ENCODE measurements at regions of chr10 and their contacts with region 1.

Region 1: GRCh38 chr10:102503281-102504220 is at the start of gene SUFU:
- DNase-seq: peak; percentile 95 to 100
- ATAC-seq: peak; percentile 76 to 90 (median 76)
- H3K4me3 ChIP-seq: peak within 1 kb of the TSS; percentile 99
- H3K4me3 Mint-ChIP-seq: no peak within 1 kb of the TSS
- H3K27ac ChIP-seq: peak within 1 kb of the TSS; percentile 90
- H3K27ac Mint-ChIP-seq: no peak within 1 kb of the TSS
- H3K4me1 ChIP-seq: peaks cover 33% of the 10 kb centered on the region
- H3K4me1 Mint-ChIP-seq: peaks cover 25% of the 10 kb centered on the region in 2 donors
- H3K27me3 ChIP-seq: no peaks in the 10 kb centered on the region
- H3K27me3 Mint-ChIP-seq: no peaks in the 10 kb centered on the region
- CTCF ChIP-seq: peak; percentile 70
- total RNA-seq, gene SUFU: 8.2 to 13.0 (median 11.5) TPM

Region 2: GRCh38 chr10:102064868-102065560 is 438.5 kb before region 1 on chr10 and contains the start of gene HPS6:
- intact Hi-C with region 1: loop called (anchors 2 kb)
- DNase-seq: peak; percentile 81 to 92
- ATAC-seq: peak; percentile 96
- H3K4me3 ChIP-seq: peak within 1 kb of the TSS; percentile 55
- H3K4me3 Mint-ChIP-seq: peak within 1 kb of the TSS; percentile 90
- H3K27ac ChIP-seq: peak within 1 kb of the TSS; percentile 81
- H3K27ac Mint-ChIP-seq: peak within 1 kb of the TSS; percentile 72 to 88
- H3K4me1 ChIP-seq: peaks cover 36% of the 10 kb centered on the region
- H3K4me1 Mint-ChIP-seq: peaks cover 21 to 33% of the 10 kb centered on the region in 2 donors
- H3K27me3 ChIP-seq: no peaks in the 10 kb centered on the region
- H3K27me3 Mint-ChIP-seq: no peaks in the 10 kb centered on the region
- CTCF ChIP-seq: no peak
- total RNA-seq, gene HPS6: 10.2 to 20.1 (median 18.5) TPM

Region 3: DNA sequence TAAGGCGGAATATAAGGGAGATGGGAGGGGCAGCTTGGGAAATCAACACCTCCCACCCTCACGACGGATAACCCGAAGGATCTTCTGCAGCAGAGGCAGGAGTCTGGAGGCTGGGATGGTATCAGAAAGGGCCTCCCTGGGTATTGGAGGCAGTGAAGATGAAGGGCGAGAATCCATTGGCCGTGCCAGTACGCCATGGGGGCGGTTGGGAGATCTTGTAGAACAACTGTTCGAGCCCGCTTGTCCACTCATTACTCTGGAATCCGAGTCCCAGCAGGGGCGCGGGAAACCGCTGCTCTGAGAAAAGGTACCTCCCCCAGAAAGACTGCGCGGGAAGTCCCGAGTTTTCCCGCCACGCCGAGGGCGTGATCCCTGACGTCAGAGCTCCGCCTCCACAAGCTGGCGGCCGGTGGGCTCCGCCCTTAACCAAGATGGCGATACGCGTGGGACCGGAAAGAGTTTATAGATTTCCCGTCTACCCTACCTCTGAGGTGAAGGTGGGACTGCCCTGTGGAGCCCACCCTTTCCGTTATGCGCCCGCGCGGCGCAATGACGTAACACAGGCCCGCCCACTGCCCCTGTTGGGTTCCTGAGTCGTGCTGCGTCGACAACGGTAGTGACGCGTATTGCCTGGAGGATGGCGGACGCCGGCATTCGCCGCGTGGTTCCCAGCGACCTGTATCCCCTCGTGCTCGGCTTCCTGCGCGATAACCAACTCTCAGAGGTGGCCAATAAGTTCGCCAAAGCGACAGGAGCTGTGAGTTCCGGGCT is 351.6 kb before region 1 on chr10 and contains the start of gene NOLC1:
- intact Hi-C with region 1: loop called (anchors 1 kb)
- DNase-seq: peak; percentile 100
- ATAC-seq: peak; percentile 88 to 97 (median 88)
- H3K4me3 ChIP-seq: peak within 1 kb of the TSS; percentile 90
- H3K4me3 Mint-ChIP-seq: peak within 1 kb of the TSS; percentile 93
- H3K27ac ChIP-seq: peak within 1 kb of the TSS; percentile 97
- H3K27ac Mint-ChIP-seq: peak within 1 kb of the TSS; percentile 93 to 97
- H3K4me1 ChIP-seq: peaks cover 24% of the 10 kb centered on the region
- H3K4me1 Mint-ChIP-seq: peaks cover 20 to 31% of the 10 kb centered on the region in 2 donors
- H3K27me3 ChIP-seq: no peaks in the 10 kb centered on the region
- H3K27me3 Mint-ChIP-seq: no peaks in the 10 kb centered on the region
- CTCF ChIP-seq: no peak
- total RNA-seq, gene NOLC1: 42.6 to 47.5 (median 43.4) TPM

Region 4: GRCh38 chr10:102432162-102432950 is 71.2 kb before region 1 on chr10 and contains the start of gene CUEDC2:
- intact Hi-C with region 1: loop called (anchors 2 kb)
- DNase-seq: peak; percentile 95 to 96
- ATAC-seq: peak; percentile 94 to 97 (median 96)
- H3K4me3 ChIP-seq: peak within 1 kb of the TSS; percentile 99
- H3K4me3 Mint-ChIP-seq: peak within 1 kb of the TSS; percentile 97
- H3K27ac ChIP-seq: peak within 1 kb of the TSS; percentile 63
- H3K27ac Mint-ChIP-seq: peak within 1 kb of the TSS; percentile 86 to 91
- H3K4me1 ChIP-seq: peaks cover 56% of the 10 kb centered on the region
- H3K4me1 Mint-ChIP-seq: peaks cover 56 to 57% of the 10 kb centered on the region in 2 donors
- H3K27me3 ChIP-seq: no peaks in the 10 kb centered on the region
- H3K27me3 Mint-ChIP-seq: no peaks in the 10 kb centered on the region
- CTCF ChIP-seq: no peak
- total RNA-seq, gene CUEDC2: 35.0 to 43.0 (median 37.7) TPM

Region 5: DNA sequence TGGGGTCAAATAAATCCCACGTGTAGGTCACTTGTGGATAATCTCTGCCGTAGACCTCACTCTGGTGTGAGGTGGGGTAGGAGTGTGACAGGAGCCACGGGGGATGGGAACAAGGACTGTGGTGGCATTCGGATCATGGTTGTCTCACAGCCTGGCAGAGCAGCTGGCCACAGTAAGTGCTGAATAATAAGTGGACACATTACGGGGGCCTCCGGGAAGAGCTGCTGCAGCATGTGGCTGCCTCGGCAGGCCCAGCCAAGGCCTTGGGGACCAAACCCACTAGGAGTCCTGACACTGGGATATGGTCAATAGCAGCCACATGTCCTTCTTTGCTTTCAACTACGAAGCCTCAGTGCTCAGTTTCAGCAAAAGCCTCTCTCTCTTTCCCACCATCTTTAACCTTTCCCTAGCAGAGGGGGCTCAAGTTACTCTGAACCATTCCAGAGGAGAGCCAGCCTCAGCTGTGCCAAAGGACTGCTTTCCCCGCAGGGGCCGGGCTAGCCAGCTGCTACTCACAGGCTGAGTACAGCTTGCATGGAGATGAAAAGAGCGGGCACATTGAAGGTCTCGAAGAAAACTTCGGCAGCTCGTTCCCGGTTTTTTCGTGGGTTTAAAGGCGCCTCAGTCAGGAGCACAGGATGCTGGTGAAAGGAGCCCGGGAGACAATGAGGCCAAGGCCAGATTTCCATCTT is 18.3 kb before region 1 on chr10:
- intact Hi-C with region 1: no loop called
- DNase-seq: no peak
- ATAC-seq: no peak
- H3K4me3 ChIP-seq: no peak overlapping the region
- H3K4me3 Mint-ChIP-seq: no peak overlapping the region
- H3K27ac ChIP-seq: no peak overlapping the region
- H3K27ac Mint-ChIP-seq: no peak overlapping the region
- H3K4me1 ChIP-seq: no peaks in the 10 kb centered on the region
- H3K4me1 Mint-ChIP-seq: no peaks in the 10 kb centered on the region
- H3K27me3 ChIP-seq: no peaks in the 10 kb centered on the region
- H3K27me3 Mint-ChIP-seq: no peaks in the 10 kb centered on the region
- CTCF ChIP-seq: no peak

Region 6: DNA sequence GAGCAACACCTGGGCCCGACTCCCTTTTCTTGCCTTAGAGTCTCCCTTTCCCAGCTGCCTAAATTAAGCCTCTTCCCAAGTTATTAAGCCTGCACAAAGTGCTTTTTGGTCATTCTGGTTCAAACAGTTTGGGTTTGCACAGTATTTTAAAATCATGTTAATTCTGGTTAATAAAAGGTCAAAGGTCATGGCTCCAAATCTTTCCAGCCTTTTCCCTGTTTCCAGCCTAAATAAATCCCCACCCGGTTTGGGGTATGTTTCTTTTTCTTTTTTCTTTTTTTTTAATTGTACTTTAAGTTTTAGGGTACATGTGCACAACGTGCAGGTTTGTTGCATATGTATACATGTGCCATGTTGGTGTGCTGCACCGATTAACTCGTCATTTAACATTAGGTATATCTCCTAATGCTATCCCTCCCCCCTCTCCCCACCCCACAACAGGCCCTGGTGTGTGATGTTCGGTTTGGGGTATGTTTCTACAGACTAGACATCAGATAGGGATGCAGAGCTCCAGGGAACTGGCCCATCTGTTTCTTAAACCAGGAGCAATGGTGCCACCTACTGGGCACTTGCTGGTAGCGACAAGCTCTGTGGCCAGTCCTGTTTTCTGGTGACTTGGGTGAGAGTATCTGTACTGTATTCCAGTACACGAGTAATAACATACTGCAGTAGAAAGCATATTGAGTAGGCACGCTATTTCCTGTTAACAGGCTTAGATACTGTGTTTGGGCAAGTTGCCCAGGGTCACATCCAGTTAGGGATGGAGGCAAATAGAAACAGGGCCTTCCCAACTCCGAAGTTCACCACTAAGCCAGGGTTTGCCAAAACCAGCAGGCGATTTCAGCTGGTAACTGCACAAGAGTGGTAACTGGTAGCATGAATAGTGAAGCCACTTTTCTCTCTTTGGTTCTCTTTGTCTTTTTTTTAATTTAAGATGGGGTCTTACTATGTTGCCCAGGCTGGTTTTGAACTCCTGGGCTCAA is 80.2 kb after region 1 on chr10:
- intact Hi-C with region 1: loop called (anchors 1 kb)
- DNase-seq: peak; percentile 69 to 91
- ATAC-seq: peak; percentile 91 to 99 (median 98)
- H3K4me3 ChIP-seq: no peak overlapping the region
- H3K4me3 Mint-ChIP-seq: no peak overlapping the region
- H3K27ac ChIP-seq: no peak overlapping the region
- H3K27ac Mint-ChIP-seq: no peak overlapping the region
- H3K4me1 ChIP-seq: peaks cover 4% of the 10 kb centered on the region
- H3K4me1 Mint-ChIP-seq: peaks cover 0 to 1% of the 10 kb centered on the region in 2 donors
- H3K27me3 ChIP-seq: no peaks in the 10 kb centered on the region
- H3K27me3 Mint-ChIP-seq: no peaks in the 10 kb centered on the region
- CTCF ChIP-seq: peak; percentile 88

Region 7: GRCh38 chr10:102629661-102630614 is 126.4 kb after region 1 on chr10:
- intact Hi-C with region 1: no loop called
- DNase-seq: no peak
- ATAC-seq: no peak
- H3K4me3 ChIP-seq: no peak overlapping the region
- H3K4me3 Mint-ChIP-seq: no peak overlapping the region
- H3K27ac ChIP-seq: no peak overlapping the region
- H3K27ac Mint-ChIP-seq: no peak overlapping the region
- H3K4me1 ChIP-seq: peaks cover 12% of the 10 kb centered on the region
- H3K4me1 Mint-ChIP-seq: peaks cover 0 to 4% of the 10 kb centered on the region in 2 donors
- H3K27me3 ChIP-seq: no peaks in the 10 kb centered on the region
- H3K27me3 Mint-ChIP-seq: no peaks in the 10 kb centered on the region
- CTCF ChIP-seq: no peak

Region 8: DNA sequence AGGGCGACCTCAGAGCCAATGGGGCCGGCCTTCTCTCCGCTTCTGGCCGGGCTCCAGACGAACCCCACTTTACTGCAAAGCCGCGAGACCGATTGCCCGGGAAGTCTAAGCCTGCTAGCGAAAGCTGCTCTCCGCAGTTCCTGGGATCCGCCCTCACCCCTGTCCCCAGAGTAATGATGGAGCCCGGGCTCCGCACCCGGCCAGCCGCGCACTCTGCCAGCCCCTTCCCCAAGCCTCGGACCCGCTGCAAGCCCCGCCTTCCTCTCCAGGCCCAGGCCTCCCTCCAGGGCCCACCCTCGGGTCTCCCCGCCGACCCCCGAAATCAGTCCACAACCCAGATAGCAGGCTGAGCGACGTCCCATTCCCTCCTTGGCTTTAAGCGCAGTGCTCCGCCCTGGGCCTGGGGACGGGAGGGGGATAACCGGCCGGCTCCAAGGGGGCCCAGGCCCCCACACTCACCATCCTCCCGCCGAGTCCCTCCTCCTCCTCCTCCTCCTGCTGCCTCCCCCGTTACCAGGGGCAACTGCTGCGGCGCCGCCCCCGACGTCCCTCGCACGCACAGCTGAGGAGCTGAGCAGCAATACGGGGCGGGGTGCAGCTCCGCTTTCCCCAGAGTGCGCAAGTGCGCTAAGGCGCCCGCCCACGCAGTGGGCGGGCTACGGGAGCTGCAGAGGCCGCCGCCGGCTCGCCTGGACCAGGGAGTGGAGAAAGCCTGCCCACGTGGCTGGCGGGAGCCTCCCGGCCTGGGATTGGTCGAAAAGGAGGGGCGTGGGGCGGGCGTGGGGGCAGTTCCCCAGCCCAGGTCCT is 210.5 kb after region 1 on chr10 and contains the start of gene ARL3:
- intact Hi-C with region 1: loop called (anchors 5 kb)
- DNase-seq: peak; percentile 82 to 97
- ATAC-seq: peak; percentile 92 to 98 (median 94)
- H3K4me3 ChIP-seq: peak within 1 kb of the TSS; percentile 99
- H3K4me3 Mint-ChIP-seq: peak within 1 kb of the TSS; percentile 82
- H3K27ac ChIP-seq: peak within 1 kb of the TSS; percentile 89
- H3K27ac Mint-ChIP-seq: peak within 1 kb of the TSS; percentile 79 to 96
- H3K4me1 ChIP-seq: peaks cover 15% of the 10 kb centered on the region
- H3K4me1 Mint-ChIP-seq: peaks cover 17 to 34% of the 10 kb centered on the region in 2 donors
- H3K27me3 ChIP-seq: no peaks in the 10 kb centered on the region
- H3K27me3 Mint-ChIP-seq: no peaks in the 10 kb centered on the region
- CTCF ChIP-seq: peak; percentile 67
- total RNA-seq, gene ARL3: 1.4 to 1.7 (median 1.5) TPM